Right cardiac atrium (tissue), 5 donors: ENCODE measurements at regions of chr18 and their contacts with region 1.

Region 1: GRCh38 chr18:24600076-24600654 is 139.7 kb downstream of the HRH4 start:
- DNase-seq: no peak
- ATAC-seq: no peak
- H3K4me3 ChIP-seq: no peak overlapping the region
- H3K27ac ChIP-seq: no peak overlapping the region
- H3K4me1 ChIP-seq: no peaks in the 10 kb centered on the region
- H3K27me3 ChIP-seq: no peaks in the 10 kb centered on the region

Region 2: GRCh38 chr18:24368749-24369148 is 231.4 kb before region 1 on chr18:
- intact Hi-C with region 1: no loop called
- DNase-seq: no peak
- ATAC-seq: no peak
- H3K4me3 ChIP-seq: no peak overlapping the region
- H3K27ac ChIP-seq: no peak overlapping the region
- H3K4me1 ChIP-seq: no peaks in the 10 kb centered on the region
- H3K27me3 ChIP-seq: no peaks in the 10 kb centered on the region

Region 3: GRCh38 chr18:24672165-24672941 is 72.2 kb after region 1 on chr18:
- intact Hi-C with region 1: loop called in 2 of 4 experiments (anchors 2 to 10 kb)
- DNase-seq: no peak
- ATAC-seq: no peak
- H3K4me3 ChIP-seq: no peak overlapping the region
- H3K27ac ChIP-seq: no peak overlapping the region
- H3K4me1 ChIP-seq: no peaks in the 10 kb centered on the region
- H3K27me3 ChIP-seq: no peaks in the 10 kb centered on the region

Region 4: DNA sequence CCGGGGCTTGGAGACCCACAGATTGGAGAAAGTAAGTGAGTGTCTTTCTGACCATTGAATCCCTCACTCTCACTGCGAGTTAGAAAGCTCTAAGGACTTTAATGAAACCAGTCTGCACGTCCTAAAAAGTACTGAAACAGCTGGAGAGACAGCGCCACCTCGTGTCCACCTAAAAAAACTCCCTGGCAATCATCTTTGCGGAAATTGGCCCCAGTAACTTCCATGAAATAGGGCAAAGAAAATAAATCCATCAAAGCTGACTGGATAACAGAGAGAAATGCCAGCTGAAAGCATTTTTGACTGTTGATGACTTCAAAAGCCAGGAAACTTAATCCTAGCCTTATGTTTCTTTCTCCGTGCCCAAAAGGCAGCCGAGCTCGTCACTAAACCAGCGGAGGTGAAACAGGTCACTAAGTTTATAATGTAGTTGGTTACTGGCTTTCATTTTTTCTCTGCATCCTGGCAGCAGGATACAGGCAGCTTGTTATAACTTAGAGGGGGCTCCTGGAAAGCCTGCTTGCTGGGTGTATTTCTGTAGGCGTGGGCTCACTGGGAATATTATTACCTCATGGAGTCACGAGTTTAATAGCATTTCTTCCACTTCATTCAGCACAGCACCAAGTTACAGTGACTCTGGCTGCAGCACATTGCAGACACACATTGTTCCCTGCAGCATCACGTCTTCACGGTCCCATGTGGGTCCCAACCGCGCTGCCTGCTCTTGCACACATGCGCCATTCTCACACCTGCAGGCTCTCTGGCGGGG is 126.7 kb after region 1 on chr18:
- intact Hi-C with region 1: loop called (anchors 2 to 5 kb)
- DNase-seq: peak; percentile 60 to 75 (median 66)
- ATAC-seq: peak; percentile 76 to 83
- H3K4me3 ChIP-seq: peak overlapping the region; percentile 2
- H3K27ac ChIP-seq: no peak overlapping the region
- H3K4me1 ChIP-seq: no peaks in the 10 kb centered on the region
- H3K27me3 ChIP-seq: no peaks in the 10 kb centered on the region

Region 5: GRCh38 chr18:25164848-25165811 is 565.0 kb after region 1 on chr18:
- intact Hi-C with region 1: no loop called
- DNase-seq: peak in 2 of 3 donors; percentile 49 to 54
- ATAC-seq: peak; percentile 77 to 86
- H3K4me3 ChIP-seq: peak overlapping the region; percentile 79
- H3K27ac ChIP-seq: peak overlapping the region; percentile 67
- H3K4me1 ChIP-seq: no peaks in the 10 kb centered on the region
- H3K27me3 ChIP-seq: no peaks in the 10 kb centered on the region